ENCODE measurements at regions of chr5 and their contacts with region 1.

Region 1: GRCh38 chr5:138035605-138036537 is 3.0 kb upstream of the FAM13B start:
- DNase-seq: peak; percentile 96
- H3K4me3 Mint-ChIP-seq: no peak overlapping the region
- H3K27ac Mint-ChIP-seq: peak overlapping the region; percentile 4
- H3K4me1 Mint-ChIP-seq: peaks cover 26% of the 10 kb centered on the region
- H3K27me3 Mint-ChIP-seq: no peaks in the 10 kb centered on the region
- CTCF ChIP-seq: peak; percentile 93

Region 2: GRCh38 chr5:137629646-137630045 is 406.2 kb before region 1 on chr5:
- CTCF ChIA-PET with region 1: interaction called, 8 read pairs
- POLR2A ChIA-PET with region 1: no interaction called
- intact Hi-C with region 1: loop called (anchors 10 kb)
- DNase-seq: peak; percentile 87
- H3K4me3 Mint-ChIP-seq: no peak overlapping the region
- H3K27ac Mint-ChIP-seq: no peak overlapping the region
- H3K4me1 Mint-ChIP-seq: no peaks in the 10 kb centered on the region
- H3K27me3 Mint-ChIP-seq: no peaks in the 10 kb centered on the region
- CTCF ChIP-seq: peak; percentile 99

Region 3: GRCh38 chr5:137847687-137848086 is 188.2 kb before region 1 on chr5:
- CTCF ChIA-PET with region 1: no interaction called
- POLR2A ChIA-PET with region 1: no interaction called
- intact Hi-C with region 1: no loop called
- DNase-seq: no peak
- H3K4me3 Mint-ChIP-seq: no peak overlapping the region
- H3K27ac Mint-ChIP-seq: no peak overlapping the region
- H3K4me1 Mint-ChIP-seq: no peaks in the 10 kb centered on the region
- H3K27me3 Mint-ChIP-seq: peaks cover under 1% of the 10 kb centered on the region
- CTCF ChIP-seq: no peak

Region 4: DNA sequence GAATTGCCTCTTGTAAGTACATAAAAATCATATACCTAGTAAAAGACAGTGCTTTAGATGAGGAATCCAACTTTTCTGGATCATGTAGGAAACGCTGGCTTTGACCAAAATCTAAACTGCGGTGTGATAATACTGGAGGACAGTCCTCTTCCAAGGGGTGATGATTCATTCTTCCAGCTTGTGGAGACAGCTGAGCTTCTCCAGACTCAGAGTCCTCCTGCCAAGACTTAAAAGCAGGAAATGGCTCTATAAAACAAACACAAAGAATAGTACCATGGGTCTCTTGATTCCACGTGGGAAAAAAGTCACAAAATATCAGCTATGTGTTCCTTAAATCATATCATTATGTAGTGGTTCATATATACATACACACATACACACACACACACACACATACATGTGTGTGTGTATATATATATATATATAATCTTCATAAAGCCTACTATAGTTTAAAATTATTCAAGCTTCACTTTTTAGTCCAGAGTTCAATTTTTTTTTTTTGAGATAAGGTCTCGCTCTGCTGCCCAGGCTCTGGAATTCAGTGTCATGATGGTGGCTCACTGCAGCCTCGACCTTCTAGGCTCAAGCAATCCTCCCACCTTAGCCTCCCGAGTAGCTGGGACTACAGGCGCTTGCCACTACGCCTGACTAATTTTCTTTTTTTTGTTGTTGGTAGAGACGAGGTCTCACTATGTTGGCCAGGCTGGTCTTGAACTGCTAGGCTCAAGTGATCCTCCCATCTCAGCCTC is 81.6 kb before region 1 on chr5:
- CTCF ChIA-PET with region 1: interaction called, 3 read pairs
- POLR2A ChIA-PET with region 1: interaction called, 11 read pairs
- intact Hi-C with region 1: no loop called
- DNase-seq: peak; percentile 85
- H3K4me3 Mint-ChIP-seq: peak overlapping the region; percentile 25
- H3K27ac Mint-ChIP-seq: peak overlapping the region; percentile 70
- H3K4me1 Mint-ChIP-seq: peaks cover 10% of the 10 kb centered on the region
- H3K27me3 Mint-ChIP-seq: no peaks in the 10 kb centered on the region
- CTCF ChIP-seq: no peak

Region 5: DNA sequence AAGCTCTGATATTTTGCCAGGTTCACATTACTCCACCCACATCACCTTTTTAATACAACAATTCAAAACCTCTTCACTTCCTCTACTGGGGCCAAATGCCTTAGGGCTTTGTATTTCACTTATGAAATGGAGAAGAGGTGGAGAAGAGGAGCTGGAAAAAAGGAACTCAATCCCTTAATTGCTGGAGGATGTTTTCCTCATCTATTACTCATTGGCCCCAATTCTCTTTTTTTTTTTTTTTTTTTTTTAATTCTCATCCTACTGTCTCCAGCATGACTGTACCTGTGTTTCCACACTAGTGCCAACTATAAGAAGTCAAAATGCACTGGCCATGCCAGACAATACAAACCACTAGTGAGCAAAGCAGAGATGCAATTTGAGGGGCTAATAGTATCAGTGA is 23.9 kb before region 1 on chr5:
- CTCF ChIA-PET with region 1: interaction called, 6 read pairs
- POLR2A ChIA-PET with region 1: interaction called, 12 read pairs
- intact Hi-C with region 1: no loop called
- DNase-seq: peak; percentile 92
- H3K4me3 Mint-ChIP-seq: no peak overlapping the region
- H3K27ac Mint-ChIP-seq: no peak overlapping the region
- H3K4me1 Mint-ChIP-seq: peaks cover 13% of the 10 kb centered on the region
- H3K27me3 Mint-ChIP-seq: no peaks in the 10 kb centered on the region
- CTCF ChIP-seq: no peak

Region 6: DNA sequence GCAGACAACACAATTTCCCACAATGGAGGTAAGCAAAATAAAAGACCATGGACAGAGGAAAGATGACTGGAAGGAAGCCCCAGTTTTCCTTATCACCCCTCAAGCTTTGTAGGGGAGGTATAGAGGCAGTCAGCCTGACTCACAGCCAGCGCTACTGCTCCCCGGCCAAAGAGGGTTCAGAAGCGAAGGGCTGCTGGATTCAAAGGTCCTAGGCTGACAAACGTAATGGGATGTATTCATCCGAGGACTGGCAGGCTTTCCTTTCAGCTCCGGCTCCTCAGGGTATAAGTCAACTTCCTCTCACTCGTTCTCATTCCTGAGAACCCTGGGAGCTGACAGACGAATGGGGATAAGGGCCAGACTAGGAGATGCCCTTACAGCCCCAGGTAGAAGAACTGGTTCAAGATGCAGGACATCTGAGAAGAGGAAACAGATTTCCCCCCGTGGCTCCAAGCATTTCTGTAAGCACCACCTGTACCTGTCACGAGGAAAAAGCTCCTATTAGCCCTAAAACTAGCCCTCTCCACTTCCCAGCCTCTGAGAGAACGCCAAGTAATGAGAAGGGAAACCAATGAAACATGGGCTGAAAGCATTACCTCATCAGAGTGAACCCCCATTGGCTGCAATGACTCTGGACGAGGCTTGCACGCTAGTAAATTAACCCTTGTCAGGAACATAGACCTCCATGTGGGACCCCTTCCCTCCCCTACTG is 19.1 kb after region 1 on chr5:
- CTCF ChIA-PET with region 1: interaction called, 74 read pairs
- POLR2A ChIA-PET with region 1: interaction called, 3 read pairs
- intact Hi-C with region 1: no loop called
- DNase-seq: no peak
- H3K4me3 Mint-ChIP-seq: no peak overlapping the region
- H3K27ac Mint-ChIP-seq: no peak overlapping the region
- H3K4me1 Mint-ChIP-seq: no peaks in the 10 kb centered on the region
- H3K27me3 Mint-ChIP-seq: peaks cover 18% of the 10 kb centered on the region
- CTCF ChIP-seq: no peak

Region 7: GRCh38 chr5:138110266-138110963 is 74.5 kb after region 1 on chr5:
- CTCF ChIA-PET with region 1: interaction called, 11 read pairs
- POLR2A ChIA-PET with region 1: interaction called, 3 read pairs
- intact Hi-C with region 1: no loop called
- DNase-seq: no peak
- H3K4me3 Mint-ChIP-seq: no peak overlapping the region
- H3K27ac Mint-ChIP-seq: no peak overlapping the region
- H3K4me1 Mint-ChIP-seq: peaks cover 5% of the 10 kb centered on the region
- H3K27me3 Mint-ChIP-seq: peaks cover 39% of the 10 kb centered on the region
- CTCF ChIP-seq: no peak

Region 8: DNA sequence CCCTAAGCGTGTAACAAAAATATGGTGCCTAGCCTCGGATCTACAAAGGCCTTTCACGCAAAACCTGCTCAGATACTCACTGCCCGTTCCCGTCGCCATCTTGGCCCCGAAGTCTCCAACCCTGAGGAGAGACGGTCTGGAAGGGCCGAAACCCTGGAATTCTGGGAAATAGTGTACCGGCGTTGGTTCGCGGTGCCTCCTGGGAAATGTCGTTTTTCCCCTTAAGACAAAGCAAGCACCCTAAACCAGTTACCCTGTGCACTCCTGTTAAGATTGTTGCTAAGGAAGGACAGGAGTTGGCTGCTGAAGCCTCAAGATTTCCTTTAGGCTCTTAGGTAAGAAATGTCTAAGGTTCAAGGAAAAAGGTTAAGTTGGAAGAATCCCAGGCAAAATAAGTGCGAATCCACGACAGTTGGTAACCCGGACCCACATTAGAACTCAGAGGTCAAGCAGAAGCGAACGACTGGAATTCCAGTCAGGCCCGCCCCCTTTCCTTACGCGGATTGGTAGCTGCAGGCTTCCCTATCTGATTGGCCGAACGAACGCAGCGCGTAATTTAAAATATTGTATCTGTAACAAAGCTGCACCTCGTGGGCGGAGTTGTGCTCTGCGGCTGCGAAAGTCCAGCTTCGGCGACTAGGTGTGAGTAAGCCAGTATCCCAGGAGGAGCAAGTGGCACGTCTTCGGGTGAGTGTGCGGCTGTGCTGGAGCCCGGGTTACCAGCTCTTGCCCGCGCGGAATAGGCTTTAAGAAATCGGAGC is 142.8 kb after region 1 on chr5 and contains the starts of genes BRD8 and KIF20A:
- CTCF ChIA-PET with region 1: interaction called, 9 read pairs
- POLR2A ChIA-PET with region 1: interaction called, 21 read pairs
- intact Hi-C with region 1: no loop called
- DNase-seq: peak; percentile 100
- H3K4me3 Mint-ChIP-seq: no peak within 1 kb of the TSS
- H3K27ac Mint-ChIP-seq: no peak within 1 kb of the TSS
- H3K4me1 Mint-ChIP-seq: peaks cover 17% of the 10 kb centered on the region
- H3K27me3 Mint-ChIP-seq: no peaks in the 10 kb centered on the region
- CTCF ChIP-seq: no peak
- total RNA-seq, gene BRD8: 93.4 and 108 TPM in 2 replicates
- total RNA-seq, gene KIF20A: 19.0 and 30.6 TPM in 2 replicates

Measured in MCF 10A (cell line).